ENCODE measurements at regions of chr14 and their contacts with region 1.

Region 1: DNA sequence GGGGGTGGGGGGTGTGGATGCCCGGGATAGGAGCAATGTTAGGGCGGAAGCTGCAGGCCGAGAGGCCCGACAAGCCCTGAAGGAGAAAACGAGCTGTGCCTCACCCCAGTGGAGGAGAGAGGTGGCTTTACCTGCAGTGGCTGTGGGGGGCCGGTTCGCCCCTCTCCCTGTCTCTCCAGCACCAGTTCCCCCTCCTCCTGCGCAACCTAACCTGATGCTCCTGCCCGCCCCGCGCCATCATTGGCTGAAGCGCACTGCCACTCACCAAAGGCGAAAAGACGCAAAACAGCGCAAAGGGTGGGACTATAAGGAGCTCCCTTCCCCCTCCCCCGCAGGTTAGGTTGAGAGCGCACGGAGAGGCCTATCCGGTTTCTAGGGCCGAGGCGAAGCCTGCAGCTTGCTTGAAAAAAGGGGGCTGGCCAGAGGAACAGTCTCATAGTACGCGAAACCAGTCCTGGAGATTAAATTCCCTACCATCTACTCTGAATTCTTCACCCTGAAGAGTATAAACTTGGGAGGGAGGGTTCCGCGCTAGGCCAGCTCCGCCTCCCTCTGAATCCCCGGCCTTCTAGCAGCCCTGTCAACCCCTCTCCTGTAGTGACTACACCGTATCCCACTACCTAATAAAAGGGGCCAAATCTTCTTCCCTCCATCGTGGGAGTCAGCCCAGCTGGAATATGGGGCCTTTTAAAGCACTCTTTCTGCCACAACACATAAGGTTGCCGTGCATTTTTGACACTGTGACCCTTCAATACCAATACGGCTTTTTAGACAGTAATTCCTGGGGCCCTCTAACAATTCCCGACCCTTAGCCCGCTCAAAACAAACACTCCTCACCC is 18.6 kb downstream of the CHD8 start:
- DNase-seq: peak; percentile 93 to 100 (median 99)
- ATAC-seq: peak; percentile 100
- H3K4me3 ChIP-seq: peak overlapping the region; percentile 87
- H3K4me3 Mint-ChIP-seq: peak overlapping the region; percentile 86 to 97 (median 92)
- H3K27ac ChIP-seq: peak overlapping the region; percentile 94
- H3K27ac Mint-ChIP-seq: peak overlapping the region; percentile 90 to 98 (median 94)
- H3K4me1 ChIP-seq: peaks cover 13 to 22% of the 10 kb centered on the region in 2 donors
- H3K4me1 Mint-ChIP-seq: peaks cover 43 to 86% (median 68%) of the 10 kb centered on the region in 7 donors
- H3K27me3 ChIP-seq: no peaks in the 10 kb centered on the region
- H3K27me3 Mint-ChIP-seq: no peaks in the 10 kb centered on the region

Region 2: DNA sequence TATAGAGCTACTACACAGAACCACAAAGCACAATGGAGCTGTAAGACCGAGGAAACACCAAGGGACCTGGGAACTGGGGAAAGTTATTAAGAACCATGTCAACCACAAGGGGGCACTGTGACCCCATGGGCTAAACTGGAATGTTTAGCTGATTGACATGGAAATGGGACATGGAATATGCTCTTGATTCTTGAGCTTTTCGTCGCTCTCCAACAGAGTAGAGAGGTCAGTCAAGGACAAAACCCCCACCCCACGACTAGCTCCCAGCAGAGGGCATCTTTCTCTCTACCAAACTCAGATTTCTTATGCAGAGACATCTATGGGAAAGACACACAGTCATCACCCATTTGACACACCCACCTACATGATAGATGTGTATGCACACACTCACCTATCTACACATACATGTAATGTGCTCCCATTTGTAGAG is 422.5 kb before region 1 on chr14:
- CTCF ChIA-PET with region 1: no interaction called
- POLR2A ChIA-PET with region 1: no interaction called
- intact Hi-C with region 1: no loop called
- DNase-seq: peak; percentile 56 to 82 (median 76)
- ATAC-seq: peak; percentile 88
- H3K4me3 ChIP-seq: no peak overlapping the region
- H3K4me3 Mint-ChIP-seq: no peak overlapping the region
- H3K27ac ChIP-seq: no peak overlapping the region
- H3K27ac Mint-ChIP-seq: peak overlapping the region in 1 of 9 donors; percentile 17
- H3K4me1 ChIP-seq: no peaks in the 10 kb centered on the region
- H3K4me1 Mint-ChIP-seq: peaks cover 0 to 5% (median 0%) of the 10 kb centered on the region in 7 donors
- H3K27me3 ChIP-seq: no peaks in the 10 kb centered on the region
- H3K27me3 Mint-ChIP-seq: peaks cover 12 to 29% (median 21%) of the 10 kb centered on the region in 5 donors

Region 3: DNA sequence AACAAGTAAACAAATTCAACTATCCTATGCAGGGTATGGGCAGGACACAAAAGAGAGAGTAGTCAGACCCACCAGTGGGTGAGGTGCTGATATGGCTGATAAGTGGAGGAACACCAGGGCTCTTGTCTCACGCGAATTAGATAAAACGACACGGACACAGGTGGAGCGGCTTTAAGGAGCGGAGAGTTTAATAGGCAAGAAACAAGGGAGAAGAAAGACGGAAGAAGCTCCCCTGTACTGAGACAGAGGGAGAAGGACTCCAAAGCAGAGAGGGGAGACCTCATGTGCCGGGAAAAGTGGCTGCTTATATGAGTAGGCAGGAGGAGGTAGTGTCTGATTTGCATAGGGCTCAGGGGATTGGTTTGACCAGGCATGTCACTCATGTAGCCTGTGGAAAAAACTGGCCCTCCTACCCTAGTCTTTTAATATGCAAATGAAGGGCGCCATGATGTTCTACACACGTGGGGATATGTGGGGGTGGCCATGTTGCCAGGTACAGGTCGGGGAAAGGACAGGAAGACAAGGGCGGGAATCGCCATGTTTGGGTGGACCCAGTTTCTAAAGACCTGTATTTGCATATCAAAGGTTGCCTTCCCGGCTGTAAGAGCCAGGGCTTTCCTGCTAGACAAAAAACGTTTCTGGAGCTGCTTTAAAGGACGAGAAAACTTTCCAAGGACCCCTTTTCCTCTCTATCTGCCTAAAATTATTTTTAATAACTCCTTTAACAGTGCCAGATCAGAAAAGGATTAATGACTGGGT is 128.6 kb before region 1 on chr14:
- CTCF ChIA-PET with region 1: no interaction called
- POLR2A ChIA-PET with region 1: no interaction called
- intact Hi-C with region 1: loop called in 1 of 2 experiments (anchors 2 kb)
- DNase-seq: peak; percentile 20 to 82 (median 78)
- ATAC-seq: peak; percentile 91
- H3K4me3 ChIP-seq: peak overlapping the region; percentile 63
- H3K4me3 Mint-ChIP-seq: peak overlapping the region; percentile 68 to 88 (median 83)
- H3K27ac ChIP-seq: peak overlapping the region; percentile 64
- H3K27ac Mint-ChIP-seq: peak overlapping the region; percentile 63 to 95 (median 82)
- H3K4me1 ChIP-seq: peaks cover 5 to 10% of the 10 kb centered on the region in 2 donors
- H3K4me1 Mint-ChIP-seq: peaks cover 7 to 24% (median 18%) of the 10 kb centered on the region in 7 donors
- H3K27me3 ChIP-seq: no peaks in the 10 kb centered on the region
- H3K27me3 Mint-ChIP-seq: peaks cover 0 to 17% (median 0%) of the 10 kb centered on the region in 5 donors